ENCODE measurements at regions of chr9 and their contacts with region 1.

Region 1: GRCh38 chr9:72557549-72557948 is 36.1 kb downstream of the TMC1 start:
- DNase-seq: peak; percentile 79
- H3K4me3 Mint-ChIP-seq: peak overlapping the region; percentile 28
- H3K27ac Mint-ChIP-seq: peak overlapping the region; percentile 79
- H3K4me1 Mint-ChIP-seq: peaks cover 16% of the 10 kb centered on the region
- H3K27me3 Mint-ChIP-seq: no peaks in the 10 kb centered on the region

Region 2: GRCh38 chr9:72509635-72510034 is 47.9 kb before region 1 on chr9:
- intact Hi-C with region 1: loop called (anchors 5 kb)
- DNase-seq: no peak
- H3K4me3 Mint-ChIP-seq: peak overlapping the region; percentile 64
- H3K27ac Mint-ChIP-seq: peak overlapping the region; percentile 83
- H3K4me1 Mint-ChIP-seq: peaks cover 19% of the 10 kb centered on the region
- H3K27me3 Mint-ChIP-seq: no peaks in the 10 kb centered on the region

Region 3: DNA sequence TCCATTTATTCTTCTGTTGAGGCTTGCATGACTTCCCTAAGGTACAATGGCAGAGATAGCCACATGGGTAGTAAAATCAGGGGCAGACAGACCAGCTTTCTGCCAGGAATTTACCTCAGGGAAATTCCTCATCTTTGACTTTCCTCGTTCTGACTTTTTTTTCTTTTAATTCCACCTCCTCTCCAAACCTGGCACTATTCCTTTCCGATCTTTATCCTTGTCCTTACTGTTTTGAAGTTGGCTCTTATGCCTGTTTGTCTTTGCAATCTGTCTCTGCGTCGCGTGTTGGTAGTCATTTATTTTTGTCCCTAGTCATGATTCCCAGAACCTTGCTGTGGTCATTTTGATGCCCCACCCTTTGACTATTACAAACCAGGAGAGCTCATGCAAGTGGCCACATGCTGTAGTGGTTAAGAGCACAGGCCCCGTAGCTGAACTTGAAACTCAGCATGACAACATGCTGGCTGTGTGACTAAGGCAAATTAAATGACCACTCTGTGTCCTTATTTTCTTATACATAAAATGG is 17.1 kb before region 1 on chr9:
- intact Hi-C with region 1: loop called (anchors 1 kb)
- DNase-seq: no peak
- H3K4me3 Mint-ChIP-seq: no peak overlapping the region
- H3K27ac Mint-ChIP-seq: peak overlapping the region; percentile 31
- H3K4me1 Mint-ChIP-seq: peaks cover 42% of the 10 kb centered on the region
- H3K27me3 Mint-ChIP-seq: no peaks in the 10 kb centered on the region

Region 4: DNA sequence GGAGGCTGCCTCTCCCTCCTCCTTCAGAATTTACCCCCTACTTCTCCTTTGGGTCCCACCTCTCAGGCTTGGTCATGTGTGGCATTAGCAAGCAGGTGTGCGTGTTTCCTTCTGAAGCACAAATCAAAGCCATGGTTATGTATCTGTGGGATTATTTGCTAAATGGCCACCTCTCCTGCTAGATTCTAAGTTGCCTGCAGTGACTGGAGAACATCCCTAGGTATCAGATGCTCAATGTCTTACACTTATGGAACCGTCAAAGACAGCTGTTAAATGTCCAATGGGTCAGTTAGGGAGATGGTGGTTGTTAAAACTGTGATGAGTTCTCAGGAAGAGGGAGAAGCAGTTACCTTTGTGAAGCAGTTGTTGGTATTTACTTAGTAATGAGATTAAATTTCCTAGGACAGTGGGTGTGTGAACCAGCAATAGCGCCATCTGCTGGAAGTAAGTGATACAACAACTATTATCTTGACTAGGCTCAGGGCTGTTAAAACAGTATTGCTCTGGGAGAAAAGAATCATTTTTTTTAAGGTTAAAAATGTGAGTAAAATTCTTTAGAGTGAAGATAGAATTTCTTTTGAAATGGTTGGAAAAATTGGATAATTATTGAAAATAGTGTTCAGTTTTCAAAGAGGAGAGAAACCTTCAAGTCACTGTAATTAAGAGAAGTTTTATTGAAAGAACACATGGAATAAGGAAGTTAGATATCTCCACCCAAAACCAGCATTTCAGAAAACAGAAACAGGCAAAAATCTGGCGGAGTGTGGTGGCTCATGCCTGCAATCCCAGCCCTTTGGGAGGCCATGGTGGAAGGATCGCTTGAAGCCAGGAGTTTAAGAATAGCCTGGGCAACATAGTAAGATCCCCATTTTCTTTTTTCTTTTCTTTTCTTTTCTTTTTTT is 35.2 kb after region 1 on chr9:
- intact Hi-C with region 1: loop called (anchors 1 kb)
- DNase-seq: peak; percentile 79
- H3K4me3 Mint-ChIP-seq: no peak overlapping the region
- H3K27ac Mint-ChIP-seq: no peak overlapping the region
- H3K4me1 Mint-ChIP-seq: peaks cover 45% of the 10 kb centered on the region
- H3K27me3 Mint-ChIP-seq: peaks cover 8% of the 10 kb centered on the region